ENCODE measurements at regions of chr12 and their contacts with region 1.

Region 1: GRCh38 chr12:68317047-68317667 is 15.0 kb downstream of the MDM1 start:
- DNase-seq: no peak
- H3K4me3 ChIP-seq: no peak overlapping the region
- H3K27ac ChIP-seq: no peak overlapping the region
- H3K4me1 ChIP-seq: peaks cover 3 to 22% (median 16%) of the 10 kb centered on the region in 4 donors
- H3K27me3 ChIP-seq: no peaks in the 10 kb centered on the region
- CTCF ChIP-seq: peak; percentile 64 to 76 (median 72)
- EP300 ChIP-seq: no peak
- POLR2A ChIP-seq: no peak

Region 2: DNA sequence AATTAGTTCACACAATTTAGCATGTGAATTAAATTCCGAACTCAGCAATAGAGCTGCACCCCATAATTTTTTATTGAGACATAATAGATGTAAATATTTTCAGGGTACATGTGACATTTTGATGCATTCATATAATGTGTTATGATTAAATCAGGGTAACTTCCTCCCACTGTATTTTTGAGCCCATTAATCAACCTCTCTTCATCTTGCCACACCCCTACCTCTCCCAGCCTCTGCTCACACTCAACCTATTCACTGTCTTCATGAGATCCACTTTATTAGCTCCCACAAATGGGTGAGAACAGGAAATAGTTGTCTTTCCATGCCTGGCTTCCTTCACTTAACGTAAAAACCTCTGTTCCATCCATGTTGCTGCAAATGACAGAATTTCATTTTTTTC is 106.3 kb before region 1 on chr12:
- intact Hi-C with region 1: no loop called
- DNase-seq: no peak
- H3K4me3 ChIP-seq: no peak overlapping the region
- H3K27ac ChIP-seq: no peak overlapping the region
- H3K4me1 ChIP-seq: no peaks in the 10 kb centered on the region
- H3K27me3 ChIP-seq: peaks cover 0 to 24% (median 0%) of the 10 kb centered on the region in 4 donors
- CTCF ChIP-seq: no peak
- EP300 ChIP-seq: no peak
- POLR2A ChIP-seq: no peak

Region 3: GRCh38 chr12:68223083-68223747 is 93.9 kb before region 1 on chr12:
- intact Hi-C with region 1: loop called (anchors 1 kb)
- DNase-seq: peak; percentile 95
- H3K4me3 ChIP-seq: peak overlapping the region in 2 of 4 donors; percentile 21 to 39
- H3K27ac ChIP-seq: peak overlapping the region in 1 of 4 donors; percentile 22
- H3K4me1 ChIP-seq: peaks cover 0 to 22% (median 11%) of the 10 kb centered on the region in 4 donors
- H3K27me3 ChIP-seq: no peaks in the 10 kb centered on the region
- CTCF ChIP-seq: peak; percentile 82 to 85 (median 84)
- EP300 ChIP-seq: no peak
- POLR2A ChIP-seq: no peak

Region 4: GRCh38 chr12:68349921-68350606 is 32.9 kb after region 1 on chr12:
- intact Hi-C with region 1: no loop called
- DNase-seq: no peak
- H3K4me3 ChIP-seq: no peak overlapping the region
- H3K27ac ChIP-seq: peak overlapping the region in 2 of 4 donors; percentile 20 to 26
- H3K4me1 ChIP-seq: peaks cover 0 to 40% (median 37%) of the 10 kb centered on the region in 4 donors
- H3K27me3 ChIP-seq: no peaks in the 10 kb centered on the region
- CTCF ChIP-seq: no peak
- EP300 ChIP-seq: no peak
- POLR2A ChIP-seq: no peak